ENCODE measurements at regions of chr11 and their contacts with region 1.

Region 1: DNA sequence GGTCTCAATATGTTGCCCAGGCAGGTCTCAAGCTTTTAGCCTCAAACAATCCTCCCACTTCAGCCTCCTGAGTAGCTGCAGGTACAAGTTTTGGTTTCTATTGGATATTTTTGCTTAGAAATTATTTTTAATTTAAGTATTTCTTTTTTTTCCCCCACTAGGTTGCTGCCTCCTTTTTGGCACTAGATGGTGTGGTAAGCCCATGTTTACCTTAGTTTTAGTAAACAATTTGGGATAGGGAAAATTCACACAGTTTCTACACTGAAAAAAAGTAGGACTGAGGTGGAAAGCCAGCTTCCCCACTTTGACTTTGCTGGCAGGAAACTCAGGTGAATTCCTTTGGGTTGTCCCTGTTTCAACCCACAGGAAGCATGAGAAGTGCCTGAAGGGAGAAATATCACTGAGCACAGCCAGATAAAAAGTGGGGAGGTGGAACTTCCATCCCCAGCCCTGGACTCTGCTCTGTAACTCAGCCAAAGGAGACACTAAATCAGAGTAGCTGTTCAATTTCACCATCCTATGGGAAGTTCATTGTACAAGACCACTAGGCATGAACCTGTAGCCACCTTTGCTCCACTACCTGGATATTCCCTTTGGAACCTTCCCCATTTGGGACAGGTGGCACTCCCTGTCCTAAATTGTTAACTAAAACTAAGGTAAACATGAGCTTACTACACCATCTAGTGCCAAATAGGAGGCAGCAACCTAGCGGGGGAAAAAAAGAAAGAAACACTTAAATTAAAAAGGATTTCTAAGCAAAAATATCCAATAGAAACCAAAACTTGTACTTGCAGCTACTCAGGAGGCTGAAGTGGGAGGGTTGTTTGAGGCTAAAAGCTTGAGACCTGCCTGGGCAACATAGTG is 154.4 kb upstream of the FAT3 start:
- DNase-seq: no peak
- ATAC-seq: no peak
- H3K4me3 Mint-ChIP-seq: no peak overlapping the region
- H3K27ac Mint-ChIP-seq: no peak overlapping the region
- H3K4me1 Mint-ChIP-seq: no peaks in the 10 kb centered on the region
- H3K27me3 Mint-ChIP-seq: no peaks in the 10 kb centered on the region
- CTCF ChIP-seq: no peak

Region 2: DNA sequence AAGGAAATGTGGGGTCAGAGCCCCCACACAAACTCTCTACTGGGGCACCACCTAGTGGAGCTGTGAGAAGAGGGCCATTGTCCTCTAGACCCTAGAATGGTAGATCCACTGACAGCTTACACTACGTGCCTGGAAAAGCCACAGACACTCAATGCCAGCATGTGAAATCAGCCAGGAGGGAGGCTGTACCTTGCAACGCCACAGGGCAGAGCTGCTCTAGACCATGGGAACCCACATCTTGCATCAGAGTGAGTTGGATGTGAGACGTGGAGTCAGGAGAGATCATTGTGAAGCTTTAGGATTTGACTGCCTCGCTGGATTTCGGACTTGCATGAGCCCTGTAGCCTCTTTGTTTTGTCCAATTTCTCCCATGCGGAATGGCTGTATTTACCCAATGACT is 1394.3 kb before region 1 on chr11:
- CTCF ChIA-PET with region 1: no interaction called
- POLR2A ChIA-PET with region 1: no interaction called
- intact Hi-C with region 1: loop called (anchors 10 kb)
- DNase-seq: no peak
- ATAC-seq: no peak
- H3K4me3 Mint-ChIP-seq: no peak overlapping the region
- H3K27ac Mint-ChIP-seq: no peak overlapping the region
- H3K4me1 Mint-ChIP-seq: no peaks in the 10 kb centered on the region
- H3K27me3 Mint-ChIP-seq: no peaks in the 10 kb centered on the region
- CTCF ChIP-seq: no peak

Measured in activated B cell treated with CpG ODN at 0.5 μM for 24 hours (primary cell).